ENCODE measurements at regions of chr21 and their contacts with region 1.

Region 1: DNA sequence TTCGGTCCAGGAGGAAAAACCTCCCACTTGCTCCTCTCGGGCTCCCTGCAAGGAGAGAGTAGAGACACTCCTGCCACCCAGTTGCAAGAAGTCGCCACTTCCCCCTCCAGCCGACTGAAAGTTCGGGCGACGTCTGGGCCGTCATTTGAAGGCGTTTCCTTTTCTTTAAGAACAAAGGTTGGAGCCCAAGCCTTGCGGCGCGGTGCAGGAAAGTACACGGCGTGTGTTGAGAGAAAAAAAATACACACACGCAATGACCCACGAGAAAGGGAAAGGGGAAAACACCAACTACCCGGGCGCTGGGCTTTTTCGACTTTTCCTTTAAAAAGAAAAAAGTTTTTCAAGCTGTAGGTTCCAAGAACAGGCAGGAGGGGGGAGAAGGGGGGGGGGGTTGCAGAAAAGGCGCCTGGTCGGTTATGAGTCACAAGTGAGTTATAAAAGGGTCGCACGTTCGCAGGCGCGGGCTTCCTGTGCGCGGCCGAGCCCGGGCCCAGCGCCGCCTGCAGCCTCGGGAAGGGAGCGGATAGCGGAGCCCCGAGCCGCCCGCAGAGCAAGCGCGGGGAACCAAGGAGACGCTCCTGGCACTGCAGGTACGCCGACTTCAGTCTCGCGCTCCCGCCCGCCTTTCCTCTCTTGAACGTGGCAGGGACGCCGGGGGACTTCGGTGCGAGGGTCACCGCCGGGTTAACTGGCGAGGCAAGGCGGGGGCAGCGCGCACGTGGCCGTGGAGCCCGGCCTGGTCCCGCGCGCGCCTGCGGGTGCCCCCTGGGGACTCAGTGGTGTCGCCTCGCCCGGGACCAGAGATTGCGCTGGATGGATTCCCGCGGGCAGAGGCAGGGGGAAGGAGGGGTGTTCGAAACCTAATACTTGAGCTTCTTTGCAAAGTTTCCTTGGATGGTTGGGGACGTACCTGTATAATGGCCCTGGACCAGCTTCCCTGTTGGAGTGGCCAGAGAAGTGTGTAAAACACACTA is 45.3 kb downstream of the MRPL39 start:
- DNase-seq: peak; percentile 70
- CTCF ChIP-seq: peak; percentile 31

Region 2: DNA sequence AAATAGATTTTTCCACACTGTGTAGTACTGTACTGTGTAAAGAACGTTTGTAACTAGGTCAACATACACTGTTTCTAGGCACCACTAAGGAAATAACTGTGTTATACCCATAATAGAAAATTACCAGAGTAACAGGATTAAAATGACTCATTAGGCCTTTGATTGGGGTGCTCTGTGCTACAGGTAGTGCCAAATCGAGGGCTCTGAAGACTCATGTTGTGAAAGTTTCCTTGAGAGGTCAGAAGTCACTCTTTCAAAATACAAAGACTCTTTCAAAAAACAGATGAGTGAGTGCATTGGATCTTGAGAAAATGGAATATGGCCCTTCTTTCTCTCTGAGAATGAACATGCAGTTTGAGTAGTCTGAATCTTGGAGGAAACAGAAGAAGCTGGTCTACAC is 97.7 kb before region 1 on chr21:
- in situ Hi-C with region 1: loop called (anchors 10 kb)
- DNase-seq: no peak
- CTCF ChIP-seq: no peak

Region 3: DNA sequence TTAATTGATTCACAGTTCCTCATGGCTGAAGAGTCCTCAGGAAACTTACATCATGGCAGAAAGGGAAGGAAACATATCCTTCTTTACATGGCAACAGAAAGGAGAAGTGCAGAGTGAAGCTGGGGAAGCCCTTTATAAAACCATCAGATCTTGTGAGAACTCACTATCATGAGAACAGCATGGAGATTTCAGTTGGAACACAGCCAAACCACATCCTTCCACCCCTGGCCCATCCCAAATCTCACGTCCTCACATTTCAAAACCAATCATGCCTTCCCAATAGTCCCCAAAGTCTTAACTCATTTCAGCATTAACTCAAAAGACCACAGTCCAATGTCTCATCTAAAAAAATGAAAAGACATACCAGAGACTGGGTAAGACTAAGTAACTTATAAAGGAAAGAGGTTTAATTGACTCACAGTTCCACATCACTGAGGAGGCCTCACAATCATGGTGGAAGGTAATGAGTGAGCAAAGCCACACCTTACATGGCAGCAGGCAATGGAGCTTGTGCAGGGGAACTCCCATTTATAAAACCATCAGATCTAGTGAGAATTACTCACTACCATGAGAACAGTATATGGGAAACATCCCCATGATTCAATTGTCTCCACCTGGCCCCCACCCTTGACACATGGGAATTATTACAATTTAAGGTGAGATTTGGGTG is 59.8 kb before region 1 on chr21:
- in situ Hi-C with region 1: loop called (anchors 5 kb)
- DNase-seq: no peak
- CTCF ChIP-seq: no peak

Measured in GM13976 (cell line).